Activated naive CD8-positive, alpha-beta T cell treated with anti-CD3 and anti-CD28 coated beads, Interleukin-2, amount 10 ng/mL, durations not matched to agents 7 days and 5 days (primary cell): ENCODE measurements at regions of chrX and their contacts with region 1.

Region 1: DNA sequence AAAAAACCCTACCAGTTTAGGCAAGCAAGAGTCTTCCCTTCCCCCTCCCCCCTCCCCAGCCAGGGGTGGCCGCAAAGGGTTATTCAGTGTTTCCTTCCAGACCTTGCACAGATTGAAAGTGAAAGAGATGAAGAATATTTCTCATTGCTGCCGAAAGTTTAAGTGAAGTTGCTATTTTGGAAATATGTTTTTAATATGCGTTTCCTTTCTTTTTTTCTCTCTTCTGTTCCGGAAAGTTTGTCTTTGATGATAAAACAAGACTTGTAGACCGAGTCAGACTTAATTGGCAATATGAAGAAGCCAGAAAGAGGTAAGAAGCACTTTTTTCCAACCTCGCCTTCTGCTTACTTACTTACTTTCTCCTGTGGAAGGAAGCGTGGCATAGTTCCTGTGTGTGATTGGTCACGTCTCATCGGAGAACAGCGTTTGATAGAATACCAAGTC is 58.5 kb upstream of the CLCN4 start:
- DNase-seq: no peak
- ATAC-seq: peak; percentile 74
- H3K4me3 Mint-ChIP-seq: peak overlapping the region; percentile 95
- H3K27ac Mint-ChIP-seq: peak overlapping the region; percentile 90
- H3K4me1 Mint-ChIP-seq: peaks cover 29% of the 10 kb centered on the region
- H3K27me3 Mint-ChIP-seq: no peaks in the 10 kb centered on the region

Region 2: DNA sequence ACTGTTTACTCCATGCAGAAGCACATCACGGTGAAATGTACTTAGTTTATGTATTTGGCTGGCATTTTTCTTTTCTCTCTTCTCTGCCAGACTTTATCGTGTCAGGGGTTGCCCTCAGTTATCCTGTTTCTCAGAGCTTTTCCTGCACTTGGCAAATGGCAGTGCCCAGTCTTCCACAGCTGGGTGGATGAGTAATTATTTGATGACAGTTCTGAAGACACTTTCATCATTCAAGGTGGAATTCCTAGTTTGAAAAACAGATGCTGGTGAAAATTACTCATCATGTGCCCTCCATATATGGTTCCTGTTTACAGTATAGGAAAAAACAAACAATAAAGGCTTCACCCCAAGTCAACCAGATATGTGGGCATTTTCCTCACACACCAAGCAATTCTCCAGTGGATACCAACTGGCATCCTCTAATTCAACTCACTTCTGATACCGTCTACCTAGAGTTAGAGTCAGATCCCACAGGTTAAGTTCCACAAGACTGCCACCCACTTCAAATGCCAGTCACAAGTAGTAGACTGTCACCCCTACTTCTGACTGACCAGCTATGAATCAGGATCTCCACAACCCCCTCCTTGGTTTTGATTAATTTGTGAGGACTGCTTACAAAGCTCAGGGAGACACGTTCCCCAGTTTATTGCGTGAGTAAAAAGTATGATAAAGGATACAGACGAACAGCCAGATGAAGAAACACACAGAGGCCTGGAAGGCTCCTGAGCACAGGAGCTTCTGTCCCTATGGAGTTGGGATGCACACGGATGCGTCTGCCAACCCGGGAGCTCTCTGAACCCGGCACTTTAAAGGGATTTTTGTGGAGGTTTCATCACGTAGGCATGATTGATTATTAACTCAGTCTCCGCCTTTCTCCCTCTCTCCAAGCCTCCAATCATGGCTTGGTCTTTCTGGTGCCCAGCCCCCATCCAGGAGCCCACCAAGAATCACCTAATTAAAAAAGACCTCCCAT is 58.2 kb before region 1 on chrX:
- POLR2A ChIA-PET with region 1: no interaction called
- DNase-seq: no peak
- ATAC-seq: no peak
- H3K4me3 Mint-ChIP-seq: no peak overlapping the region
- H3K27ac Mint-ChIP-seq: no peak overlapping the region
- H3K4me1 Mint-ChIP-seq: no peaks in the 10 kb centered on the region
- H3K27me3 Mint-ChIP-seq: no peaks in the 10 kb centered on the region

Region 3: DNA sequence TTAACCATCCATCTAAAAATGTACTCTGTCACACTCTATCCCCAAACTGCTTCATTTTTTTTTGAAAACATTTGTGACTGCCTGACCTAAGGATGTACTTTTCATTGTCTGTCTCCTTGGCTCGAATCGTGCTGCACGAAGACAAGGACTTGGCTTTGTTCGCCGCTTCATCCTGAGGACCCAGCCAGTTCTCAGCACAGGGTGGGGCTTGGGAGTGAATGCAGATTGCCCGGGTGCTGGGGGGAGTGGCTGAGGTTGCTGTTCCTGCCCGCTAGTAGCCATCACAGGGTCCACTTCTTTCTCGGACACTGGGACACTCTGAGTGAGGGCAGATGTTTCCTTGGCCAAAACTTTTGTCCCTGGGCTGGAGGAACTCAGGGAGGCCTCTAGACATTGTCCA is 11.6 kb before region 1 on chrX:
- POLR2A ChIA-PET with region 1: interaction called, 10 read pairs
- DNase-seq: no peak
- ATAC-seq: no peak
- H3K4me3 Mint-ChIP-seq: no peak overlapping the region
- H3K27ac Mint-ChIP-seq: no peak overlapping the region
- H3K4me1 Mint-ChIP-seq: peaks cover 18% of the 10 kb centered on the region
- H3K27me3 Mint-ChIP-seq: no peaks in the 10 kb centered on the region

Region 4: DNA sequence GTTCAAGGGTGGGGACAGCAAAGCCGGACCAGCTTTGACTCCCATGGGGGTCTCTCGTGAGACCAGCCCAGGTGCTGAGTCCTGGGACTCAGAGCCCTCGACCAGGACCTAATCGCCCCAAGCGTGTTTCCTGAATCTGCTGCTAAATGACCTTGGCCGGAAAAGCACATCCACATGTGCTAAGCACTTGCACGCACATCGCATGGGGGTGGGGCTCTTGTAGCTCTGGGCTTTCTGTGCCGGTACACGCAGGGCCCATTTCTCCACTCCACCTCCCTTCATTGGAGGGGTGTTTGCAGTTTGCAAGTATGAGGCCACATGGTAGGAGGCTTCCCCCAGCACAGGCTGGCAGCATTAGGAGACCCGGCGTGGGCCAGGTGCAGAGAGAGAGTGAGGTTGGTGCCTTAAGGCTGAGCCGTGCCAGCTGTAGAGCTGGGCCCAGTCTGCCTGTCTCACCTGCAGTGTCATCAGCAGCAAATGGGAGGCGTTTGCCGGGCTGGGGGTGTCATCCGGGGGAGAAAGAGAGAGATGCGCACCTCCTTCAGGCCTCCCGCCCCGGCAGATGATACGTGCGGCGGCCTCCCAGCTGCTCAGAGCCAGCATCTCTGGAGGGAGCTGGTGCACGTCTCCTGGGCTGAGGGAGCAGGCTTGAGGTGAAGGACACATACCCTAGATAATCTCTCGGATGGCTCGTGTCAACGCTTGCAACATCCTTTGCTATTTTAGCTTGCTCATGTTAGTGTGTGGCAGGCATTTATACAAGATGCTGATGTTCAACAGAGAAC is 13.3 kb after region 1 on chrX:
- POLR2A ChIA-PET with region 1: interaction called, 45 read pairs
- DNase-seq: peak; percentile 66
- ATAC-seq: peak; percentile 67
- H3K4me3 Mint-ChIP-seq: peak overlapping the region; percentile 90
- H3K27ac Mint-ChIP-seq: peak overlapping the region; percentile 100
- H3K4me1 Mint-ChIP-seq: peaks cover 42% of the 10 kb centered on the region
- H3K27me3 Mint-ChIP-seq: no peaks in the 10 kb centered on the region